Vagina (tissue), 2 donors: ENCODE measurements at regions of chr7 and their contacts with region 1.

Region 1: DNA sequence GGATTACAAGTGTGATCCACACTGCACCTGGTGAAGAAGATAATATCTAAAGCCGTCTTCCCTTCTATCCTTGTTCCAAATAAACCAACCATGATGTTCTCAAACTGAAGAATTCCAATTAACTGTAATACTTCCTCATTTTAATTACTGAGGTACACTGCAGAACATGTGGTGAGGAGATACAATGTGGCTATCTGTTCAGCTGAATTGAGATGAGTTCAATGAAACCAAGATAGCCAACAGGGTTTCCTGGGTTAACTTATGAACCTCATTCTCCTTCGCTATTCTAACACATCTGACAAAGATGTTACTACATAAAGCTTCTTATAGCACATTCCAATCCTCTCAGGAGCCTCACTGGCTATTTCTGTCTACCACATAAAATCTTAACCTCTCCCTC is 75.5 kb downstream of the RAPGEF5 start:
- DNase-seq: no peak
- H3K4me3 ChIP-seq: no peak overlapping the region
- H3K27ac ChIP-seq: no peak overlapping the region
- H3K4me1 ChIP-seq: no peaks in the 10 kb centered on the region
- H3K27me3 ChIP-seq: no peaks in the 10 kb centered on the region
- CTCF ChIP-seq: no peak
- POLR2A ChIP-seq: no peak

Region 2: DNA sequence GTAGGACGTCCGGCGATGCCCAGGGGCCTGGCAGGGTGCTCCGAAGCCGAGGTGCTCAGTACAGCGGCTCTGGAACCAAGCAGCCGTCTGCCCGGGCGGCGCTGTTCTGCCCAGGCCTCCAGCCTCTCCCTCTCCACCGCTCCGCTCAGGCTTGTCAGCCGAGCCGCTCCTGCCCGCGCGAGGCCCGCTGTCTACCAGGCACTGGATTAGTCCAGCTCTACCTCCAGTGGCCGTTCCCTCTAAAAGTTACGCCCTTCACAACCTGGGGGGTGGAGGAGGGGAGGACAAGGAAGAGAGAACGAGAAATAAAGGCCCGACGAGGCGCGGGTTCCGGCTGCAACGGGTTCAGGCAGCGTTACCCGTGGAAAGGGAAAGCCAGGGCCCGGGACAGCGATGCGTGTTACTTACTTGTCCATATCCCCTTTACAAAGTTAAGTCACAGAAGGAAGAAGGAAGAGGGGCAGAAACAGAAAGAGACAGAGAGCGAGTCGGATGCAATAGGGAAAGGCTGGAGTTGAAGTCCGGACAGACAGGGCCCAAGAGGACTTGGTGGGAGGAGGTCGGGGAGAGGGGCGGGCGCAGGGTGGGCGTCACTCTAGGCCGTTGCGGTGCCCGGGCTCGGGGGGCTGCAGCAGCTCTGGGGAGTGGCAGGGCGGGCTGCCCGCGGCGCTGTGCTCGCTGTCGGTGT is 1497.6 kb before region 1 on chr7:
- intact Hi-C with region 1: loop called (anchors 5 kb)
- DNase-seq: no peak
- H3K4me3 ChIP-seq: peak overlapping the region; percentile 31 to 39
- H3K27ac ChIP-seq: no peak overlapping the region
- H3K4me1 ChIP-seq: peaks cover 30% of the 10 kb centered on the region
- H3K27me3 ChIP-seq: peaks cover 8% of the 10 kb centered on the region
- CTCF ChIP-seq: no peak
- POLR2A ChIP-seq: no peak

Region 3: DNA sequence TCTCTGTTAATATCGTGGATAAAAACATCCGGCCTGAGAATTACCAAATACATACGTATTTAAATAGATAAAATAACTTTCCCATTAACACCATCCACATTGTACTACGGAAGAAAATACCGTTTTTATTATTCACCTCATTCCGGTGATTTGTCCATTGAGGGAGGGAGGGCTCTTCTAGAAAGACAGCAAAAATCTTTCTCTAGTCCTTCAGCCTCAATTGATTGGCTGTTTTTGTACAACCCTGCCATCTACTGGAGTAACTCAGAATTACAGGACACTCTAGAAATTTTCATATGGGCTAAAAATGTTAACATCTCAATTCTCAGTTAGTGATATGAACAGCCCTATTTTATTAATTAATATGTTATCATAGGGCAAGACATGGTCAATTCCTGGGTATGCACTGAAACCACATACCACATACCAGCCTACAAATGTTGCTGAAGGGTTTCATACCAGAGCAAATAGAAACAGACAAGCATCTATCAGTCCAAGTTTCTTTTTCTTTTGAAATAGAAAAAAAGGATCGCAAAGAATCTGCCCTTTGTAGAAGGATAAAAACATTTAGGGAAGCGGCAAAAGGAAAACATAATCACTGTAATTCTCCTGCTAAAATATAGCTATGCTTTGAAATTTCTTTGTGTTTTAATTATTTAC is 280.0 kb before region 1 on chr7:
- intact Hi-C with region 1: no loop called
- DNase-seq: no peak
- H3K4me3 ChIP-seq: no peak overlapping the region
- H3K27ac ChIP-seq: no peak overlapping the region
- H3K4me1 ChIP-seq: no peaks in the 10 kb centered on the region
- H3K27me3 ChIP-seq: no peaks in the 10 kb centered on the region
- CTCF ChIP-seq: peak; percentile 52 to 74 (median 60)
- POLR2A ChIP-seq: no peak